ENCODE measurements at regions of chr14 and their contacts with region 1.

Region 1: DNA sequence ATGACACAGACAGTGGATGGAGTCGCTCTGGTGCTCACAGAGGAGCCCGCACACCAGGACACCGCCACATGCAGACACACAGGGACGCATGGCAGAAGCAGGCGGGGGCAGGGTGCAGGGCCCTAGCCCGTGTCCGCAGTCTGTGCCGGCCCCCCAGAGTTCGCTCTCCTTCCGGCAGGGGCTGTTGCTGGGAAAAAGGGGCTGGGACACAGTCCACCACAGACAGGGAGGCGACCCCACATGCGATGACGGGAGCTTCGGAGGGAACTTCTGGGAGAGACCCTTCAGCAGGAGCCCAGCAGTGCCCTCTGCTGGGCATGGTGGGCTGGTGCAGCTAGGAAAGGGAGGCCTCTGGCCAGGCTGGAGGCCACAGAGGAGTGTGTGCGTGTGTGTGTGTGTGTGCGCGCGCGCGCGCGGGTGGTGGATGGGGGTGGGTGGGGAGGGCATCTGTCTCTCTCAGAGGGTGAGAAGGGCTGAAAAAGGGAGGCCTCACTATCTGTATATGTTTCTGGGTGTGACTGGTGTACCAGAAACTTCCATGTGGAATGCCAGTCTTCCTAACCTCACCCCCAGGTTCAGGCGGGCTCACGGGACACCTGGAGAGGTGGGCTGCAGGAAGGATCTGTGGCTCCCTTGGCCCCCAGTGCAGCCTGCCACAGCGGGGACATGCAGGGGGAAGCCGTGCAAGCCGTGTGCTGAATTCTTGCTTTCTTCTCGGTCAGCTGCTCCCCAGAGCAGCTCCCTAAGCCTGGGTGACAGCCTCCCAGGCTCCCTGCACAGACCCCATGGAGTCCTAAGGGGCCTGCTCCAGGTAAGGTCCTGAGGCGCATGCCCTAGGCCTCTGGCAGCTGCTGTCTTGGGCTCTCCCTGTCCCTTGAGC is 60.7 kb downstream of the PLEKHG3 start:
- DNase-seq: peak; percentile 76 to 79 (median 78)
- ATAC-seq: peak; percentile 73
- H3K4me3 ChIP-seq: no peak overlapping the region
- H3K27ac ChIP-seq: peak overlapping the region in 2 of 4 donors; percentile 2 to 43
- H3K4me1 ChIP-seq: peaks cover 33% of the 10 kb centered on the region
- H3K27me3 ChIP-seq: no peaks in the 10 kb centered on the region
- CTCF ChIP-seq: peak; percentile 90 to 97 (median 95)
- POLR2A ChIP-seq: no peak

Region 2: GRCh38 chr14:64671591-64671990 is 93.3 kb before region 1 on chr14:
- intact Hi-C with region 1: loop called (anchors 5 kb)
- DNase-seq: peak in 1 of 4 donors; percentile 52
- ATAC-seq: peak; percentile 84
- H3K4me3 ChIP-seq: no peak overlapping the region
- H3K27ac ChIP-seq: no peak overlapping the region
- H3K4me1 ChIP-seq: no peaks in the 10 kb centered on the region
- H3K27me3 ChIP-seq: no peaks in the 10 kb centered on the region
- CTCF ChIP-seq: peak; percentile 41 to 93 (median 79)
- POLR2A ChIP-seq: no peak

Region 3: GRCh38 chr14:64688811-64689281 is 76.0 kb before region 1 on chr14:
- intact Hi-C with region 1: no loop called
- DNase-seq: peak in 3 of 4 donors; percentile 39 to 59 (median 50)
- ATAC-seq: peak; percentile 18
- H3K4me3 ChIP-seq: no peak overlapping the region
- H3K27ac ChIP-seq: no peak overlapping the region
- H3K4me1 ChIP-seq: peaks cover 29% of the 10 kb centered on the region
- H3K27me3 ChIP-seq: no peaks in the 10 kb centered on the region
- CTCF ChIP-seq: no peak
- POLR2A ChIP-seq: no peak

Measured in body of pancreas (tissue), 4 donors.